Dorsolateral prefrontal cortex (tissue), 120 donors: ENCODE measurements at regions of chr19 and their contacts with region 1.

Region 1: GRCh38 chr19:36665832-36666231 is 805 bp downstream of the ZNF461 start:
- DNase-seq: no peak
- H3K4me3 ChIP-seq: peak overlapping the region; percentile 61 to 100 (median 85)
- H3K27ac ChIP-seq: peak overlapping the region in 2 of 59 donors; percentile 84 to 89
- H3K27me3 ChIP-seq: no peaks in the 10 kb centered on the region
- CTCF ChIP-seq: no peak

Region 2: GRCh38 chr19:36605101-36605876 is 60.5 kb before region 1 on chr19 and contains the start of gene ZNF382:
- intact Hi-C with region 1: loop called in 1 of 2 experiments (anchors 5 kb)
- DNase-seq: peak; percentile 68 to 89 (median 76)
- H3K4me3 ChIP-seq: peak within 1 kb of the TSS; percentile 45 to 97 (median 90)
- H3K27ac ChIP-seq: peak within 1 kb of the TSS; percentile 58 to 98 (median 92)
- H3K27me3 ChIP-seq: no peaks in the 10 kb centered on the region
- CTCF ChIP-seq: peak in 1 of 56 donors; percentile 14
- total RNA-seq, gene ZNF382: 32.5 to 84.9 (median 57.0) TPM